ENCODE measurements at regions of chr5 and their contacts with region 1.

Region 1: GRCh38 chr5:73365301-73365853 is 83.2 kb downstream of the FOXD1 start:
- DNase-seq: peak; percentile 88
- ATAC-seq: peak; percentile 86
- H3K4me3 ChIP-seq: no peak overlapping the region
- H3K27ac ChIP-seq: peak overlapping the region; percentile 96
- H3K4me1 ChIP-seq: peaks cover 41% of the 10 kb centered on the region
- H3K27me3 ChIP-seq: no peaks in the 10 kb centered on the region
- CTCF ChIP-seq: no peak

Region 2: DNA sequence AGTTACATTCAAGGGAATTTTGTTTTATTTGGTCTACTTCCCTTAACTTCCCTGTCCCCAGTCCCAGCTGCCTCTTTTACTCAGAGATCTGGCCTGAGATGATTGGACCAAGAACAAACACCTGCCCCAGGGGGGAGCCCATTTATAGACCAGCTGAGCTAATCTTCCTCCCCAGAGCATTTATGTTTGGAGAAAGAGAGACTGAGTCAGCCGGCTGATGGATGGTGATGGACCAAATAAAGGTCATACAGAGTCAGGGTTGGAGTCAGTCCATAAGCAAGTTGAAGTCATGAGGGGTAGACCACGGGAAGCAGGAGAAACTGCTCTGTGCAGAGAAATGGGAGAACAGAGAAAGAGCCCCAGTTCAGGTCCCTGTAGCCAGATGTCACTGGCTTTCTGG is 114.7 kb before region 1 on chr5:
- CTCF ChIA-PET with region 1: no interaction called
- POLR2A ChIA-PET with region 1: no interaction called
- intact Hi-C with region 1: no loop called
- DNase-seq: no peak
- ATAC-seq: no peak
- H3K4me3 ChIP-seq: no peak overlapping the region
- H3K27ac ChIP-seq: no peak overlapping the region
- H3K4me1 ChIP-seq: no peaks in the 10 kb centered on the region
- H3K27me3 ChIP-seq: no peaks in the 10 kb centered on the region
- CTCF ChIP-seq: no peak

Region 3: GRCh38 chr5:73338256-73339050 is 26.9 kb before region 1 on chr5:
- CTCF ChIA-PET with region 1: no interaction called
- POLR2A ChIA-PET with region 1: no interaction called
- intact Hi-C with region 1: loop called (anchors 2 kb)
- DNase-seq: peak; percentile 49
- ATAC-seq: peak; percentile 87
- H3K4me3 ChIP-seq: peak overlapping the region; percentile 59
- H3K27ac ChIP-seq: peak overlapping the region; percentile 65
- H3K4me1 ChIP-seq: peaks cover 20% of the 10 kb centered on the region
- H3K27me3 ChIP-seq: no peaks in the 10 kb centered on the region
- CTCF ChIP-seq: no peak

Region 4: DNA sequence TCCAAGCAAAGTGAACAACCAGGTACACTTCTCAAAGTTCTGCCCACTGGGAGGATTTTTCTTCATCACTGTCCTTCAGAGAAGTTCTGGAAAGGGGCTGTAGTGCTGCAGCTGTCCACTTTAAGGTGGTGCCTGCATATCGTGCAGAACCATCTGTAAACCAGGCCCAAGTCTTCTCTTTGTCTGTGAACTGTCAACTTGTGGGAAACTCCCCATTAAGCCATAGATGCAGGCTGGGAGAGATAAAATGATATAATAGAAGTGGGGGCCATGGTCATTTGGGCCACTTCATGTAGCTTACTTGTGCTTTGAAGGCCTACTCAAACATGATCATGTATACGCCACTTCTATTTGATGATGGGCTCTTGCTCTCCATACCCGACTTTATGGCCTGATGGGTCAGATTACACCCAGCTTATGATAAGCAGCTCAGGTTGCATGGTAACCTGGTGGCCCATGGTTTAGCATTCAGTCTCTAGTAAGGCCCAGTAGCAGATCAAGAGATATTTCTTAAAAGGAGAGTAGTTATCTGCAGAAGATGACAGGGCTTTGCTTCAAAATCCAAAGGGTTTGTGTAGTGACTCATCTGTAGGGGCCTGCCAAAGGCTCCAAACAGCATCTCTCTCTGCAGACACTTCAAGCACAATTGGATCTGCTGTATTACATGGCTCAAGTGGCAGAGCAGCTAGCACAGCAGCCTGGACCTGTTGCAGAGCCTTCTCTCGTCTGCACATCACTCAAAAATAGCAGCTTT is 117.2 kb after region 1 on chr5:
- CTCF ChIA-PET with region 1: no interaction called
- POLR2A ChIA-PET with region 1: no interaction called
- intact Hi-C with region 1: no loop called
- DNase-seq: peak; percentile 48
- ATAC-seq: peak; percentile 95
- H3K4me3 ChIP-seq: no peak overlapping the region
- H3K27ac ChIP-seq: no peak overlapping the region
- H3K4me1 ChIP-seq: no peaks in the 10 kb centered on the region; the same call in 1 of the 2 replicates
- H3K27me3 ChIP-seq: no peaks in the 10 kb centered on the region
- CTCF ChIP-seq: no peak

Region 5: DNA sequence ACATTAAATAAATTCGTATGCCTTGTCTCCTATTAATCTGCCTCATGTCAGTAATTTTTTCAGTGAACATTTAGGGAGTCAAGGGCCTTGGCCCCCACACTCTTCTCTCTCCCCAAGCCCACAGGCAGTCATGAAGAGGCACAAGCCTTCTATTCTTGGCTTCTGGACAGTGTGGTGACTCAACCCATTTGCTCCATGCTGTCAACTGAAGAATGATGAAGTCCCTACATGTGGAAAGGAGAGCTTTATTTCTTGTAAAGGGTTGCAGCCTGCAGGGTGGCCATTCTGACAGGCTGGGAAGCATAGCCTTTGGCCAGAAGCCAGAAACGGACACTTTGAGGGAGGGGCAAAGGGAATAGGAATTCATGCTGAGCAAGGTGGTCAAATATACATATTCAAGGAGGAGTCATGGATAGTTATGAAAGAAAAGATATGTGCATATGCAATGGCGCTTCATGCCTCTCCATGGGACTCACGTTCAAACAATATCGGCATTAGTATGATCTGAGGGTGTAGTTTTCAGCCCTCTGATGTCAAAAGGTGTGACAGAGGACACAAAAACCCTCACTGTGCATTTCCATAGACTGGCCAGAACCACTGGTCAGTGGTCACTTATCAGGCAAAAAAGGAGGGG is 168.8 kb after region 1 on chr5:
- CTCF ChIA-PET with region 1: no interaction called
- POLR2A ChIA-PET with region 1: no interaction called
- intact Hi-C with region 1: no loop called
- DNase-seq: no peak
- ATAC-seq: no peak
- H3K4me3 ChIP-seq: no peak overlapping the region
- H3K27ac ChIP-seq: no peak overlapping the region
- H3K4me1 ChIP-seq: 0 out of 2 replicates have a peak, but pooled peaks cover under 1% of the 10 kb centered on the region
- H3K27me3 ChIP-seq: no peaks in the 10 kb centered on the region
- CTCF ChIP-seq: no peak